H1 (cell line): ENCODE measurements at regions of chr1 and their contacts with region 1.

Region 1: GRCh38 chr1:161225534-161226319 is at the start of gene TOMM40L:
- DNase-seq: peak; percentile 86 to 96
- H3K4me3 ChIP-seq: peak within 1 kb of the TSS; percentile 75 to 93 (median 83)
- H3K27ac ChIP-seq: no peak within 1 kb of the TSS; the same call in 1 of the 2 replicates
- H3K4me1 ChIP-seq: peaks cover 2 to 6% (median 4%) of the 10 kb centered on the region in 4 experiments
- H3K27me3 ChIP-seq: 0 out of 7 replicates have a peak, but pooled peaks cover 0 to 2% (median 0%) of the 10 kb centered on the region in 4 experiments
- CTCF ChIP-seq: peak in 2 of 3 experiments; percentile 41 to 56; a peak in 3 of 4 replicates
- EP300 ChIP-seq: no peak
- POLR2A ChIP-seq: no peak
- RAD21 ChIP-seq: peak in 1 of 2 experiments; percentile 43; a peak in 2 of 4 replicates
- total RNA-seq, gene TOMM40L: 13.8 and 15.0 TPM in 2 replicates

Region 2: DNA sequence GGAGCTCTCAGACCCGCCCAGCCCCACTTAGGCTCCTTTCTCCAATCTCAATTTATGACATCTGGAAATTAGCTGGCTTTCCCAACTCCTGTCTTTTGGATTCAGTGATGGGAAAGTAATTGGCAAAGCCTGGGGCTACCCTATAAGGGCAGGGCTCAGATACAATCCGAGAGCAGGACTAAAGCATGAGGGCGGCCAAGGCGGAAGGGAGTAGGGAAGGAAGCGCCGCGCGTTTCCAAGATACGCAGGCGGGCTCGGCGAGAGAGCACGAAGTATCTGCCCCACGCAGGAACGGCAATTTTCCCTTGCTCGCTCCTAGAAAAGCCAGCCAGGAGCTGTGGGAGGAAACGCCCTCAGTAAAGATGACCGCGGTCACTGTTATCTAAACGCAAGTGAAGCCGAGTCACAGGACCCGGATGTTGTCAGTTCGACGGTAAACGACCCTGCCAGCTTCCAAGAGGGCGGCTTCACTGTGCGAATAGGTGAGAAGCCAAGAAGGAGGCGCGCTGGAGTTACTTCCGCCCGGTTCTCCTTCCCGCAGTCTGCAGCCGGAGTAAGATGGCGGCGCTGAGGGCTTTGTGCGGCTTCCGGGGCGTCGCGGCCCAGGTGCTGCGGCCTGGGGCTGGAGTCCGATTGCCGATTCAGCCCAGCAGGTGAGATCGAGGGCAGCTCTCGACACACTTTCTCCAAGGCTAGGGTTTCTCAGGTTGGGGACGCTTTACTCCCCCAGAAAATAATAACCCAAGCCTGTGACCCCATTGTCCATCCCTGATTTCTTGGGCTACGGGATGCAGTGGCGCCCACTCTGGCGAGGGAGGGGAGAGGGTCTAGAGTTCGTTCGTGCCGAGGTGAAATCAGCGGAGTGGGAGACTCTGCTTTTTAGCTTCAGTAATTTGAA is 23.6 kb before region 1 on chr1 and contains the start of gene NDUFS2:
- CTCF ChIA-PET with region 1: interaction called, 427 read pairs
- POLR2A ChIA-PET with region 1: interaction called, 82 read pairs
- DNase-seq: peak; percentile 89 to 95
- H3K4me3 ChIP-seq: peak within 1 kb of the TSS; percentile 63 to 97 (median 93)
- H3K27ac ChIP-seq: peak within 1 kb of the TSS; percentile 94
- H3K4me1 ChIP-seq: peaks cover 20 to 48% (median 42%) of the 10 kb centered on the region in 4 experiments
- H3K27me3 ChIP-seq: no peaks in the 10 kb centered on the region
- CTCF ChIP-seq: peak; percentile 31 to 62 (median 49)
- EP300 ChIP-seq: no peak
- POLR2A ChIP-seq: peak; percentile 97 to 99
- RAD21 ChIP-seq: peak in 1 of 2 experiments; percentile 23; a peak in 1 of 4 replicates
- total RNA-seq, gene NDUFS2: 88.7 and 95.1 TPM in 2 replicates

Region 3: GRCh38 chr1:161258439-161259344 is 33.0 kb after region 1 on chr1 and contains the start of gene PCP4L1:
- CTCF ChIA-PET with region 1: interaction called, 67 read pairs
- POLR2A ChIA-PET with region 1: interaction called, 5 read pairs
- DNase-seq: peak; percentile 68 to 91
- H3K4me3 ChIP-seq: peak within 1 kb of the TSS; percentile 51 to 68 (median 64)
- H3K27ac ChIP-seq: no peak within 1 kb of the TSS
- H3K4me1 ChIP-seq: peaks cover 0 to 8% (median 3%) of the 10 kb centered on the region in 4 experiments; a peak in 3 of 7 replicates
- H3K27me3 ChIP-seq: peaks cover 7 to 25% (median 22%) of the 10 kb centered on the region in 4 experiments
- CTCF ChIP-seq: no peak
- EP300 ChIP-seq: no peak
- POLR2A ChIP-seq: peak in 1 of 2 experiments; percentile 82; a peak in 2 of 3 replicates
- RAD21 ChIP-seq: no peak
- total RNA-seq, gene PCP4L1: 1.0 and 1.9 TPM in 2 replicates

Region 4: DNA sequence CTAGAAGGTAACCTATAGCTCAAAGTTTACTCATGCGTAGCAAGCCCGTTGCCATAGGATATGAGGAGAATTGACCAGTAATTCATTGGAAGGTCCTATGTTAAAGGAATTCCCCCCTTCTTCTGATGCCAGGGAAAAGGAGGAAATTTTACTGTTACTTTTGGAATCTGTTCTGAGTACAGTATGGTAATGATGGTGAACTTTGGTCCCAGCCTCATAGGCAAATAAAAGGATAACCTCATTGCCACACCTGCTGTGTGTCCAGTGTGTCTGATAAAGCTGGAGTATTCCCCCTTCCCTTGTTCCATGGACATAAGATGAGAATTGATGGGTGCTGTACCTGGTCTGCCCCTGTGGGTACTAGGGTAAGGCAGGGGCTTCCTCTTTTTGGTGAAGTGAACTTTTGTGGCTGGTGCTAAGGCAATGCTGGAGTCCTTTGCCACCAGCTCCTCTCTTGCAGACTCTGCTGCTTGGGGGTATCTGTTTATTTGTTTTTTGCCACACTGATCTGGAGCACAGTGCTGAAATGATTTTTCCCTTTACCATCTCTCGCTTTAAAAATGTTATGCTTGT is 61.8 kb after region 1 on chr1:
- CTCF ChIA-PET with region 1: interaction called, 401 read pairs
- POLR2A ChIA-PET with region 1: interaction called, 5 read pairs
- DNase-seq: no peak
- H3K4me3 ChIP-seq: no peak overlapping the region
- H3K27ac ChIP-seq: no peak overlapping the region
- H3K4me1 ChIP-seq: peaks cover 0 to 4% (median 1%) of the 10 kb centered on the region in 4 experiments; a peak in 3 of 7 replicates
- H3K27me3 ChIP-seq: no peaks in the 10 kb centered on the region; a peak in 1 of 7 replicates
- CTCF ChIP-seq: no peak
- EP300 ChIP-seq: no peak
- POLR2A ChIP-seq: no peak
- RAD21 ChIP-seq: no peak

Region 5: DNA sequence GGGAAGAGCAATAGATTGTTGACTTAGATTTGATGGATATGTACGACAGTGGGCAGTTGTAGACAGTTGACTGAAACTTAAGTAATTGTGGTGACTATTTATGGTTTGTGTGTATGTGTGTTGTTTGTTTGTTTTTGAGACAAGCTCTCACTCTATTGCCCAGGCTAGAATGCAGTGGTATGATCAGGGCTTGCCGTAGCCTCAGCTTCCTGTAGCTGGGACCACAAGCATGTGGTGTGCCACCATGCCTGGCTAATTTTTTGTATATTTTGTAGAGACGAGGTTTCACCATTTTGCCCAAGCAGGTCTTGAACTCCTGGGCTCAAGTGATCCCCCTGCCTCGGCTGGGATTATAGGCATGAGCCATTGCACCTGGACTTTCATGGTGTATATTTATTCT is 98.3 kb after region 1 on chr1:
- CTCF ChIA-PET with region 1: interaction called, 15 read pairs
- POLR2A ChIA-PET with region 1: interaction called, 3 read pairs
- DNase-seq: no peak
- H3K4me3 ChIP-seq: no peak overlapping the region
- H3K27ac ChIP-seq: no peak overlapping the region
- H3K4me1 ChIP-seq: no peaks in the 10 kb centered on the region
- H3K27me3 ChIP-seq: no peaks in the 10 kb centered on the region
- CTCF ChIP-seq: no peak
- EP300 ChIP-seq: no peak
- POLR2A ChIP-seq: no peak
- RAD21 ChIP-seq: no peak

Region 6: DNA sequence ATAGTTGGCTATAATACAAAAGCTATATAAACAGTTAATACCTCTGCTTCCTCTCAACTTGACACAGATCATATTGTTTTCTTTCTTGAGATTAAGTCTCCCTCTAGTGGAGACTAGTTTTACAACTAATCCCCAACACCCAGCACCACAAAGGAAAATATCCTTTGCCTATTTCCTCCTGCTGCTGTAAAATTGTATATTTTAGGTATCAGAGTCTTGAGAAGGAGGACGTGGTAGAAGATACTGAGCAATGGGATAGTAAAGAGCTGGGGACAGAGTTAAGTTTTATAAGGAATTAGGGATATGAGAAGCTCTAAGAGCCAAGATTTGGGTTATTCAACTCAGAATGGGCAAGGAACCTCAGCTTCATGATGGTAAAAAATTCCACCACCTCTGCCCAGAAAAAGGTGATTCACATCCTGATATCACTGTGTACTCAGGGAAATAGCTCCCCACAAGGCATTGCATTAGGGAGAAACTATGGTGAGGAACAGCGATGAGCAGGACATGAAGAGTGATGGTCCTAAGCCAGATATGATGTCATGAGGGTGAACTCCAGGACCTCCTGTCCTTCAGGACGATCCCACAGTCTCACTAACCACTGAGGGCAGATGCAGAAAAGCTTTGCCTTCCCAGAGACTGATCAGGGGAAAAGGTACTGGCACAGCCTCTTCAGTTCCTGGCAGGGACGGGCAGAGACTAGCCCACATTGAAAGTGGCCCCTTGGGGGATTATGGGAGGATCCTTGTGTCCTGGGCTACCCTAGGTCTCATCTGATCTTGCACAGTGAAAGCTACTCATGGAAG is 156.7 kb after region 1 on chr1:
- CTCF ChIA-PET with region 1: interaction called, 137 read pairs
- POLR2A ChIA-PET with region 1: interaction called, 5 read pairs
- DNase-seq: no peak
- H3K4me3 ChIP-seq: no peak overlapping the region
- H3K27ac ChIP-seq: no peak overlapping the region
- H3K4me1 ChIP-seq: no peaks in the 10 kb centered on the region
- H3K27me3 ChIP-seq: no peaks in the 10 kb centered on the region
- CTCF ChIP-seq: peak in 2 of 3 experiments; percentile 39 to 52; a peak in 2 of 4 replicates
- EP300 ChIP-seq: no peak
- POLR2A ChIP-seq: no peak
- RAD21 ChIP-seq: peak; percentile 70 to 73